K562 (cell line): ENCODE measurements at regions of chr5 and their contacts with region 1.

Region 1: GRCh38 chr5:66144074-66144833 is at the start of gene SREK1:
- DNase-seq: peak; percentile 93 to 97 (median 94)
- ATAC-seq: peak; percentile 92
- H3K4me3 ChIP-seq: peak within 1 kb of the TSS; percentile 70
- H3K27ac ChIP-seq: peak within 1 kb of the TSS; percentile 96
- H3K4me1 ChIP-seq: peaks cover 0 to 17% of the 10 kb centered on the region in 2 experiments; a peak in 3 of 5 replicates
- H3K27me3 ChIP-seq: no peaks in the 10 kb centered on the region
- CTCF ChIP-seq: no peak
- EP300 ChIP-seq: no peak; the same call in none of the 2 replicates
- POLR2A ChIP-seq: peak; percentile 97
- RAD21 ChIP-seq: no peak
- polyA plus RNA-seq, gene SREK1: 40.8 to 47.0 TPM

Region 2: DNA sequence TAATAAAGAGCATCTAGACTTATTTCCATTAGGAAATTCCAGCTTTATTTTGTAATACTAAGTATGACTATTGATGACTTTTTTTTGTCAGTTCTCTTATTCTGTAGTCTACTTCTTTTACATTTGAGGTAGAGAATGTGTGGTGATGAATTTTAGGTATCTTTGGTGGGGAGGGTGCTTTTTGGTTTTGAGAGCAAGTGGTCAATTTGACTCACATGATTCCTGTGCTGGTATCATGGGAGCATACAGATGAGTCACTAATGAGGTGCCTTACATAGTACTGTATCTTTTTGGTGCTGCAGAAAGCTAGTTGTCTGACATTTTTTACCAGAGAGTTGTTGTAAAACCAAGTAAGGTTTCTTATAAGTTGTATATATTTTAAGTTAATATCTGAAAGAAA is 182.6 kb before region 1 on chr5:
- CTCF ChIA-PET with region 1: no interaction called
- POLR2A ChIA-PET with region 1: no interaction called
- in situ Hi-C with region 1: no loop called
- intact Hi-C with region 1: loop called (anchors 10 kb)
- DNase-seq: peak; percentile 28 to 53 (median 36)
- ATAC-seq: peak; percentile 57
- H3K4me3 ChIP-seq: no peak overlapping the region
- H3K27ac ChIP-seq: no peak overlapping the region
- H3K4me1 ChIP-seq: peaks cover 9 to 10% of the 10 kb centered on the region in 2 experiments; a peak in 4 of 5 replicates
- H3K27me3 ChIP-seq: no peaks in the 10 kb centered on the region
- CTCF ChIP-seq: no peak
- EP300 ChIP-seq: no peak
- POLR2A ChIP-seq: no peak
- RAD21 ChIP-seq: no peak

Region 3: DNA sequence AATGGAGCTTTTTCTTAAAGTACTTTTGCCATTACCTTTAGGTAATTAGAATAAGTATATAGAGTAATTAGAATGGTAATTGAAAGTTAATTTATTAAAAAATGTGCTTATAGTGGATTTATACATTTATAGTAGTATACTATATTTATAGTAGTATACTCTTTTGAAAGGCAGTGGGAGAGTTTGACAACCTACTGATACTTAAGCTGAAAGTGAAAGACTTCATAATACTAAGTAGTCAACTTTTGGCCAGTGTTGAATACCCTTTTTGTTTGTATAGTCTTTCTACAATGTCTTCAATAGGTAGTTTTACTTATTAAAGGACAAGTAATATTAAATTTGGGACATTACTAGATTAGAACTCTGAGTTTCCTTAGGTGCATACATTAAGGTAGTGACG is 12.8 kb after region 1 on chr5:
- CTCF ChIA-PET with region 1: no interaction called
- POLR2A ChIA-PET with region 1: interaction called, 17 read pairs
- in situ Hi-C with region 1: no loop called
- intact Hi-C with region 1: no loop called
- DNase-seq: no peak
- ATAC-seq: no peak
- H3K4me3 ChIP-seq: no peak overlapping the region
- H3K27ac ChIP-seq: no peak overlapping the region
- H3K4me1 ChIP-seq: no peaks in the 10 kb centered on the region
- H3K27me3 ChIP-seq: no peaks in the 10 kb centered on the region
- CTCF ChIP-seq: no peak
- EP300 ChIP-seq: no peak
- POLR2A ChIP-seq: no peak
- RAD21 ChIP-seq: no peak

Region 4: DNA sequence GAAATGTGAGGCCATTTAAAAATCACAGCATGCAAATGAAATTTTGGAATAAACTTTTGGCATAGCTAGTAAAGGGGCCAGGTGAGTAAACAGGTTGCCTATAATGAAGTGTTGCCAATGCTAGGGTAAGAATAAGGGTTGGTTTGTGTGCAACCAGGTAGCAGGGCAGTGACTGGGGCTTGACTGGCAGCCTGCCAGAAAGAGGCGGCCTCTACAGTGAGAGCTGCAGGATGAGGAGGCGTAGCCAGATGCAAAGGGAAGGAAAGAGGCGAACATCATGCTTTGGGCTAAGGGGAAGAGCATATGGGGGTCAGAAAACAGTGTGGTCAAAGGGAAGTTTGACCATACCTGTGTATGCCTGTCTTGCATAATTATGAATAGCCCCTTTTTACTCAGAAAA is 522.5 kb after region 1 on chr5:
- CTCF ChIA-PET with region 1: no interaction called
- POLR2A ChIA-PET with region 1: no interaction called
- in situ Hi-C with region 1: no loop called
- intact Hi-C with region 1: no loop called
- DNase-seq: peak in 1 of 4 experiments; percentile 3
- ATAC-seq: no peak
- H3K4me3 ChIP-seq: no peak overlapping the region
- H3K27ac ChIP-seq: no peak overlapping the region
- H3K4me1 ChIP-seq: no peaks in the 10 kb centered on the region
- H3K27me3 ChIP-seq: no peaks in the 10 kb centered on the region; a peak in 1 of 5 replicates
- CTCF ChIP-seq: no peak
- EP300 ChIP-seq: no peak
- POLR2A ChIP-seq: no peak
- RAD21 ChIP-seq: no peak